Esophagus squamous epithelium (tissue), 5 donors: ENCODE measurements at regions of chr16 and their contacts with region 1.

Region 1: DNA sequence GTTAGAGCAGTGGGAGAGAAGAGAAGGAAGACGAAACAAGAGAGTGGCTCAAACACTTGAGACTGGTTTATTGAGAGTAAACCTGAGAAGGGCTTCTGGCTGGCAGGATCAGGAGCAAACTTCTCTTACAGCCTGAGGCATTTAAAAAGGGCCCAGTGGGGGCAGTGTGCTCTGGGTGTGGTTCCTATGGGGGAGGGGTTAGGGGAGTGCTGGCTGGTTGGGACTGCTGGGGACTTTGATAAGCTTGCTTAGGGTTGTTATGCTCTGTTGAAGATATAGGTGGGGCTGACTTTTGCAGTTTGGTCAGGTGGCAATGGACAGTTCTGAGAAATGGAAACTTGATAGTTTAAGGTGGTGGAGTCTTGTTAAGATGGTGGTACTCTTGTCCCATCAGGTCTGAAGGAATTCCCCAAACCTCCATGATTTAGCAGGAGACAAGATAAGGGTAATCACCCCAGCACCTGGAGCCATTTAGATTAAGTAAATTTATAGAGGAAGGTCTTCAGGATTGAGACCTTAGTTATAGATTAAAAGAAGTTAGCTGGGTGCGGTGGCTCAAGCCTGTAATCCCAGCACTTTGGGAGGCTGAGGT is 79.3 kb downstream of the EMP2 start:
- DNase-seq: no peak
- H3K4me3 ChIP-seq: no peak overlapping the region
- H3K27ac ChIP-seq: no peak overlapping the region
- H3K4me1 ChIP-seq: peaks cover 0 to 9% (median 0%) of the 10 kb centered on the region in 3 donors
- H3K27me3 ChIP-seq: no peaks in the 10 kb centered on the region
- CTCF ChIP-seq: no peak
- POLR2A ChIP-seq: no peak

Region 2: GRCh38 chr16:10250137-10250850 is 250.8 kb before region 1 on chr16:
- intact Hi-C with region 1: loop called (anchors 5 kb)
- DNase-seq: no peak
- H3K4me3 ChIP-seq: no peak overlapping the region
- H3K27ac ChIP-seq: no peak overlapping the region
- H3K4me1 ChIP-seq: peaks cover 0 to 7% (median 0%) of the 10 kb centered on the region in 3 donors
- H3K27me3 ChIP-seq: peaks cover 0 to 18% (median 0%) of the 10 kb centered on the region in 4 donors
- CTCF ChIP-seq: no peak
- POLR2A ChIP-seq: no peak

Region 3: GRCh38 chr16:10566589-10566988 is 65.5 kb after region 1 on chr16:
- intact Hi-C with region 1: no loop called
- DNase-seq: no peak
- H3K4me3 ChIP-seq: no peak overlapping the region
- H3K27ac ChIP-seq: no peak overlapping the region
- H3K4me1 ChIP-seq: peaks cover 0 to 79% (median 15%) of the 10 kb centered on the region in 3 donors
- H3K27me3 ChIP-seq: no peaks in the 10 kb centered on the region
- CTCF ChIP-seq: peak in 1 of 6 experiments; percentile 6
- POLR2A ChIP-seq: no peak